ENCODE measurements at regions of chr19 and their contacts with region 1.

Region 1: DNA sequence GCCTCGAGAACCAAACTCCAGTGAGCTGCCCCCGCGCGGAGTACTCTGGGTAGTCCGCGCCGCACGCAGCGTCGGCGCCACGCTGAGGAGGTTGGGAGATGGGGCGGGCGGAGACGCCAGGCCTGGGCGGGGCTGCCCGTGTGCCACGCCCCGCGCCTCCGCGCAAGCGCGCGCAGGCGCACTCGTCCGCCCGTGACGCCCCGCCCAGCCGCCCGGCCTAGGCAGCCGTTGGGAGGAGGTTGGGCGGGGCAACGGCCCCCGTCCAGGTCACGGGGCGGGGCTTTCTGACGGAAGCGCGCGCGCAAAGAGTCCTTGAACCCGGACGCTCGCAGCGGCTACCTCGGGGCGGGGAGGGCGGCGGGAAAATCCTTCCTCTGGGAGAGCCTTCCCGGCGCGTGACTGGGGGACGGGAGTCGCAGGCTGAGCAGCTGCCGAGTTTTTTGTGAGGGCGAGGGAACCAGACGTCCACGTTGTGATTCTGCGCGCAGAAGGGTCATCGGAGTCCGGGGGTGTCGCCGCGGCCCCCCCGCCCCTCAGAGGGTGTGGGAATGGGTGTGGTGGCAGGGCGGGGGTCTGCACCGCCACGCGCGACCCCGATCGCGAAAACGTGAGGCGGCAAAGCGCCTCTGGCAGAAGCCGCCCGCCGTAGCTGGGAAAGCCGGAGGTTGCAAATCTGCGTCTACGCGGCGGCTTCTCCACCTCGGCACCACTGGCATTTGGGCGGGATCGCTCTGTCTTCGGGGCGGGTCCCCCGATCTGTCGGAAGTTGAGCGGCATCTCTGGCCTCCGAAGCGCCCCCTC is at the start of gene MED26:
- DNase-seq: peak; percentile 96
- ATAC-seq: peak; percentile 93
- H3K4me3 Mint-ChIP-seq: peak within 1 kb of the TSS; percentile 93
- H3K27ac Mint-ChIP-seq: peak within 1 kb of the TSS; percentile 100
- H3K4me1 Mint-ChIP-seq: peaks cover 43% of the 10 kb centered on the region
- H3K27me3 Mint-ChIP-seq: no peaks in the 10 kb centered on the region
- CTCF ChIP-seq: no peak
- total RNA-seq, gene MED26: 14.2 to 19.3 TPM

Region 2: DNA sequence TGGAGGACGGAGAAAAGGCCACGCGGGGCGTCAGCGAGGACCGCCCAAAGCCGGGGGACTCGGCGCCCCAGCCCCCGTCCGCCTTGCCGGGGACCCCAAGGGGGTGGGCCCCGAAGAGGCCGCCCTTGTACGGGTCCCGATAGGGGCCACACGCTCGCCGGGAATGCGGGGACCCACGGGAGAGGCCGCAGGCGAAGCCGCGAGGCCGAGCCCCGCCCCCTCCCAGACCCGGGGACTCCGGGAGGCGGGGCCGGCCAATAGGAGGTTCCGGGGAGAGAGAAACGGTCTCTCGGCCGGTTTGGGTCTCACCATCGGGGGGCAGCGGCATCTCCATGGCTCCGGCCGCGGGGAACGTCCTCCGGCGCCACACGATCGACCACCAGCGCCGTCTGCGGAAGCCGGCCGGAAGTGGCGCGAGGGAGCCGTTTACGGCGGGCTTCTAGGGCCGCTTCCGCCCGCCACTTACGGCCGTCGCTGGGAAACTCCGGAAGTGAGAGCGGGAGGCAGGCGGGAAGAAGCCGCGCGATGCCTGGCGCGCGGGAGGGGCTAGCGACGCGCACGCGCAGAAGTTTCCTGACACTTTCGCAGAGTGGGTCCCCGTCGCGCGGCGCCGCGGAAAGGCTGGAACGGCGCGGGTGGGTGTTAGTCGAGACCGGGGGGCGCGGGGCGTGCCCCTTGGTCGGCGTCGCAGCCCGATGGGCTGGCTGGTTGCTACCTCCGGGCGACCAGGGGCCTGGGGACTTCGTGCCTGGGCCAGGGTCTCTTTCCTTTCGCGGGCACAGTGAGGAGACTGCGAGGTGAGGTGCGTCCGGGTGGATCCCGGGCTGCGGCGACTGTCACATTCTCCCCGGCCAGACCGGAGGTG is 86.1 kb before region 1 on chr19 and contains the start of gene CHERP:
- CTCF ChIA-PET with region 1: interaction called, 3 read pairs
- POLR2A ChIA-PET with region 1: interaction called, 35 read pairs
- intact Hi-C with region 1: no loop called
- DNase-seq: peak; percentile 94
- ATAC-seq: peak; percentile 92
- H3K4me3 Mint-ChIP-seq: peak within 1 kb of the TSS; percentile 83
- H3K27ac Mint-ChIP-seq: peak within 1 kb of the TSS; percentile 92
- H3K4me1 Mint-ChIP-seq: peaks cover 50% of the 10 kb centered on the region
- H3K27me3 Mint-ChIP-seq: no peaks in the 10 kb centered on the region
- CTCF ChIP-seq: no peak
- total RNA-seq, gene CHERP: 57.5 to 59.6 TPM

Region 3: GRCh38 chr19:16572332-16573211 is 55.8 kb before region 1 on chr19 and contains the start of gene SLC35E1:
- CTCF ChIA-PET with region 1: interaction called, 3 read pairs
- POLR2A ChIA-PET with region 1: interaction called, 10 read pairs
- intact Hi-C with region 1: no loop called
- DNase-seq: peak; percentile 94
- ATAC-seq: peak; percentile 93
- H3K4me3 Mint-ChIP-seq: peak within 1 kb of the TSS; percentile 100
- H3K27ac Mint-ChIP-seq: peak within 1 kb of the TSS; percentile 99
- H3K4me1 Mint-ChIP-seq: peaks cover 54% of the 10 kb centered on the region
- H3K27me3 Mint-ChIP-seq: no peaks in the 10 kb centered on the region
- CTCF ChIP-seq: no peak
- total RNA-seq, gene SLC35E1: 60.1 to 62.4 TPM

Region 4: GRCh38 chr19:16584248-16585141 is 43.9 kb before region 1 on chr19:
- CTCF ChIA-PET with region 1: interaction called, 3 read pairs
- POLR2A ChIA-PET with region 1: interaction called, 93 read pairs
- intact Hi-C with region 1: loop called (anchors 2 kb)
- DNase-seq: peak; percentile 96
- ATAC-seq: peak; percentile 79
- H3K4me3 Mint-ChIP-seq: peak overlapping the region; percentile 87
- H3K27ac Mint-ChIP-seq: peak overlapping the region; percentile 74
- H3K4me1 Mint-ChIP-seq: peaks cover 85% of the 10 kb centered on the region
- H3K27me3 Mint-ChIP-seq: no peaks in the 10 kb centered on the region
- CTCF ChIP-seq: no peak

Region 5: GRCh38 chr19:16615808-16616207 is 12.6 kb before region 1 on chr19:
- CTCF ChIA-PET with region 1: interaction called, 3 read pairs
- POLR2A ChIA-PET with region 1: interaction called, 40 read pairs
- intact Hi-C with region 1: no loop called
- DNase-seq: no peak
- ATAC-seq: peak; percentile 24
- H3K4me3 Mint-ChIP-seq: no peak overlapping the region
- H3K27ac Mint-ChIP-seq: no peak overlapping the region
- H3K4me1 Mint-ChIP-seq: peaks cover 63% of the 10 kb centered on the region
- H3K27me3 Mint-ChIP-seq: no peaks in the 10 kb centered on the region
- CTCF ChIP-seq: no peak

Region 6: GRCh38 chr19:16659831-16660708 is 31.7 kb after region 1 on chr19 and contains the start of gene SMIM7:
- CTCF ChIA-PET with region 1: interaction called, 3 read pairs
- POLR2A ChIA-PET with region 1: interaction called, 27 read pairs
- intact Hi-C with region 1: no loop called
- DNase-seq: peak; percentile 98
- ATAC-seq: peak; percentile 98
- H3K4me3 Mint-ChIP-seq: peak within 1 kb of the TSS; percentile 93
- H3K27ac Mint-ChIP-seq: peak within 1 kb of the TSS; percentile 97
- H3K4me1 Mint-ChIP-seq: peaks cover 30% of the 10 kb centered on the region
- H3K27me3 Mint-ChIP-seq: no peaks in the 10 kb centered on the region
- CTCF ChIP-seq: no peak
- total RNA-seq, gene SMIM7: 48.0 to 55.0 TPM

Region 7: DNA sequence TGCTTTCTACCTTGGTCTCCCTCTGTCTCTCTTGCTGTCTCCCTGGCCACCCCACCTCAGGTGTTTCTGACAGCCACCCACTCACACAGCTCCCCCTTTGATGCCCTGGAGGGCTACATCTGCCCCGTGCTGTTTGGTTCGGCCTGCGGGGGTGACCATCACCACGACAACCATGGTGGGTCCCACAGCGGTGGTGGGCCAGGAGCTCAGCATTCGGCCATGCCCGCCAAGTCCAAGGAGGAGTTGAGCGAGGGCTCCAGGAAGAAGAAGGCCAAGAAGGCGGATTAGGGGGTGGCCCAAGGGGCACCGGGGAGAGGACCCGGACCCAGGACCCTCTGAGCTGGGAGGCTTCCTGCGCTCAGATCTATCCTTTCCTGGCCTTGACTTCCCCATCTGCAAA is 59.7 kb after region 1 on chr19:
- CTCF ChIA-PET with region 1: no interaction called
- POLR2A ChIA-PET with region 1: no interaction called
- intact Hi-C with region 1: no loop called
- DNase-seq: no peak
- ATAC-seq: no peak
- H3K4me3 Mint-ChIP-seq: no peak overlapping the region
- H3K27ac Mint-ChIP-seq: no peak overlapping the region
- H3K4me1 Mint-ChIP-seq: no peaks in the 10 kb centered on the region
- H3K27me3 Mint-ChIP-seq: no peaks in the 10 kb centered on the region
- CTCF ChIP-seq: no peak

Region 8: GRCh38 chr19:16703677-16704076 is 75.3 kb after region 1 on chr19:
- CTCF ChIA-PET with region 1: no interaction called
- POLR2A ChIA-PET with region 1: no interaction called
- intact Hi-C with region 1: no loop called
- DNase-seq: no peak
- ATAC-seq: no peak
- H3K4me3 Mint-ChIP-seq: no peak overlapping the region
- H3K27ac Mint-ChIP-seq: no peak overlapping the region
- H3K4me1 Mint-ChIP-seq: no peaks in the 10 kb centered on the region
- H3K27me3 Mint-ChIP-seq: no peaks in the 10 kb centered on the region
- CTCF ChIP-seq: no peak